ENCODE measurements at regions of chr19 and their contacts with region 1.

Region 1: GRCh38 chr19:48933382-48933932 is at the start of gene DHDH:
- DNase-seq: peak; percentile 92
- ATAC-seq: peak; percentile 99
- H3K4me3 ChIP-seq: peak within 1 kb of the TSS; percentile 47 to 73
- H3K27ac ChIP-seq: peak within 1 kb of the TSS; percentile 28; the same call in 1 of the 2 replicates
- H3K4me1 ChIP-seq: peaks cover 12 to 20% of the 10 kb centered on the region in 2 experiments
- H3K27me3 ChIP-seq: no peaks in the 10 kb centered on the region
- CTCF ChIP-seq: no peak
- POLR2A ChIP-seq: peak; percentile 85
- RAD21 ChIP-seq: no peak
- total RNA-seq, gene DHDH: 8.6 TPM

Region 2: DNA sequence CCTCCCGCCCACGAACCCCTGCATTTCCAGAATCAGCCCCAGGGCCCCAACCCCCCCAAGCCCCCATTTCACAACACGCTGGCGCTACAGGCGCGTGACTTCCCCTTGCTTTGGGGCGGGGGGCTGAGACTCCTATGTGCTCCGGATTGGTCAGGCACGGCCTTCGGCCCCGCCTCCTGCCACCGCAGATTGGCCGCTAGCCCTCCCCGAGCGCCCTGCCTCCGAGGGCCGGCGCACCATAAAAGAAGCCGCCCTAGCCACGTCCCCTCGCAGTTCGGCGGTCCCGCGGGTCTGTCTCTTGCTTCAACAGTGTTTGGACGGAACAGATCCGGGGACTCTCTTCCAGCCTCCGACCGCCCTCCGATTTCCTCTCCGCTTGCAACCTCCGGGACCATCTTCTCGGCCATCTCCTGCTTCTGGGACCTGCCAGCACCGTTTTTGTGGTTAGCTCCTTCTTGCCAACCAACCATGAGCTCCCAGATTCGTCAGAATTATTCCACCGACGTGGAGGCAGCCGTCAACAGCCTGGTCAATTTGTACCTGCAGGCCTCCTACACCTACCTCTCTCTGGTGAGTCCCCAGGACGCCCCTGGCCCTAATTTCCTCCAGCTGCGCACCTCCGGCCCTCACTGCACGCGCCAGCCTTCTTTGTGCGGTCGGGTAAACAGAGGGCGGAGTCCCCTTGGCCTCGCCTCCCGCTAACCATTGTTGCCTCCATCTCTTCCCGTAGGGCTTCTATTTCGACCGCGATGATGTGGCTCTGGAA is 31.8 kb after region 1 on chr19 and contains the start of gene FTL:
- CTCF ChIA-PET with region 1: interaction called, 3 read pairs
- POLR2A ChIA-PET with region 1: interaction called, 4 read pairs
- RAD21 ChIA-PET with region 1: no interaction called
- intact Hi-C with region 1: loop called (anchors 1 kb)
- DNase-seq: peak; percentile 83
- ATAC-seq: peak; percentile 74
- H3K4me3 ChIP-seq: peak within 1 kb of the TSS; percentile 73 to 84
- H3K27ac ChIP-seq: peak within 1 kb of the TSS; percentile 98
- H3K4me1 ChIP-seq: peaks cover 35 to 62% of the 10 kb centered on the region in 2 experiments
- H3K27me3 ChIP-seq: no peaks in the 10 kb centered on the region
- CTCF ChIP-seq: no peak
- POLR2A ChIP-seq: peak; percentile 99
- RAD21 ChIP-seq: no peak
- total RNA-seq, gene FTL: 1,885 TPM

Measured in HCT116 (cell line).